Heart right ventricle (tissue), 16 donors: ENCODE measurements at regions of chr13 and their contacts with region 1.

Region 1: DNA sequence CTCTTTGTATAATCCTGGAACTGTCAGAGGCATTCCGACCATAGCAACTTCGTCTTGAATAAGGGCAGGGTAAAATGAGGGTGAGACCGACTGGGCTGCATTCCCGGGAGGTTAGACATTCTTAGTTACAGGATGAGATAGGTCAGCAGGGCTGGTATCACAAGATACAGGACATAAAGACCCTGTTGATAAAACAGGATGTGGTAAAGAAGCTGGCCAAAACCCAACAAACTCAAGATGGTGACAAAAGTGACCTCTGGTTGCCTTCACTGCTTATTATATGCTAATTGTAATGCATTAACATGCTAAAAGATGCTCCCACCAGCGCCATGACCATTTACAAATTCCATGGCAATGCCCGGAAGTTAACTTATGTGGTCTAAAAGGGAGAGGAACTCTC is 27.7 kb upstream of the MBNL2 start:
- DNase-seq: no peak
- ATAC-seq: no peak
- H3K4me3 ChIP-seq: no peak overlapping the region
- H3K27ac ChIP-seq: no peak overlapping the region
- H3K4me1 ChIP-seq: peaks cover 0 to 11% (median 0%) of the 10 kb centered on the region in 9 donors
- H3K27me3 ChIP-seq: no peaks in the 10 kb centered on the region
- CTCF ChIP-seq: no peak

Region 2: GRCh38 chr13:97124916-97125809 is 69.3 kb before region 1 on chr13:
- intact Hi-C with region 1: loop called in 1 of 10 experiments (anchors 10 kb)
- DNase-seq: no peak
- ATAC-seq: peak in 7 of 8 donors; percentile 44 to 66 (median 62)
- H3K4me3 ChIP-seq: peak overlapping the region in 1 of 10 donors; percentile 3
- H3K27ac ChIP-seq: peak overlapping the region in 6 of 10 donors; percentile 15 to 32 (median 24)
- H3K4me1 ChIP-seq: peaks cover 0 to 38% (median 24%) of the 10 kb centered on the region in 9 donors
- H3K27me3 ChIP-seq: no peaks in the 10 kb centered on the region
- CTCF ChIP-seq: peak in 4 of 9 donors; percentile 19 to 43 (median 27)

Region 3: GRCh38 chr13:97141564-97142005 is 52.9 kb before region 1 on chr13:
- intact Hi-C with region 1: loop called in 1 of 10 experiments (anchors 10 kb)
- DNase-seq: peak in 1 of 2 donors; percentile 18
- ATAC-seq: peak; percentile 55 to 98 (median 86)
- H3K4me3 ChIP-seq: peak overlapping the region in 6 of 10 donors; percentile 21 to 46 (median 38)
- H3K27ac ChIP-seq: no peak overlapping the region
- H3K4me1 ChIP-seq: peaks cover 0 to 25% (median 18%) of the 10 kb centered on the region in 9 donors
- H3K27me3 ChIP-seq: no peaks in the 10 kb centered on the region
- CTCF ChIP-seq: no peak